Activated CD4-positive, alpha-beta T cell treated with anti-CD3 and anti-CD28 coated beads, Interleukin-2, amount 10 ng/mL, durations not matched to agents 24 days and 14 days (primary cell): ENCODE measurements at regions of chr10 and their contacts with region 1.

Region 1: GRCh38 chr10:71771821-71772617 is 1.3 kb downstream of the VSIR start:
- DNase-seq: peak; percentile 82
- H3K4me3 Mint-ChIP-seq: peak overlapping the region; percentile 85
- H3K27ac Mint-ChIP-seq: peak overlapping the region; percentile 96
- H3K4me1 Mint-ChIP-seq: peaks cover 67% of the 10 kb centered on the region
- H3K27me3 Mint-ChIP-seq: no peaks in the 10 kb centered on the region

Region 2: DNA sequence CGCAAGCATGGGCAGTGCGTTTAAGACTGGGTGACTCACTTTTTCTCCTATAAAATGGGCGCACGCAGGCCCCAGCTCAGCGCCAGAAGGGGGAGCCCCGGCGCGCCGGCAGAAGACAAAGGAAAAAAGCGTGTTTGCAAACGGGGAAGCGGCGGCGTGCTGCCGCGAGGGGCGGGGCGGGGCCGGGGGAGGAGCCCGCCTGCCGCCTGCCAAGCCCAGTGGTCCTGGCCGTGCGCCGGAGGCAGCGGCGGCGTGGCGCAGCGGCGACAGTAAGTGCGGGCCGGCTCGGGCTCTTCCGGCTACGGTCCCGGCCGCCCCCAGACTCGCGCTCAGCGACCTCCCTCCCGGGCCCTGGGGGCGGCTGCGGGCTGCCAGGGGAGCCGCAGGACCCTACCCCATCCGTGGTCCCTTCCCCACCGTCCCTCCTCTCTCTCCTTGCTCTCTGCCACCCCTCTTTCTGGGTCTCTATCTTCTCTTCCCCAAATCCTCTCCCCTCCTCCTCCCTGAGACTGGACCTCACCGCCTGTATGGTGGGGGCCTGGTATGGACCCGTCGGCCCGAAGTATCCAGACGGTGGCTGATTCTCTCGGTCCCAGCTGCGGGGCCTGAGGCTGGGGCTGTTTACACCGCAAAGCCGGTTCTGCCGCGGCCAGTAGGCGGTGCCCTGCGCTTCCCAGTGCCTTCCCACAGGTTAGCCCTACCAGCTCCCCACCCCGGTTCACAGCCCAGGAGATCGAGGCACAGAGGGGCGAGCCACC is 452.8 kb before region 1 on chr10 and contains the start of gene SLC29A3:
- intact Hi-C with region 1: loop called (anchors 5 kb)
- DNase-seq: peak; percentile 95
- H3K4me3 Mint-ChIP-seq: peak within 1 kb of the TSS; percentile 98
- H3K27ac Mint-ChIP-seq: peak within 1 kb of the TSS; percentile 94
- H3K4me1 Mint-ChIP-seq: peaks cover 34% of the 10 kb centered on the region
- H3K27me3 Mint-ChIP-seq: no peaks in the 10 kb centered on the region
- total RNA-seq, gene SLC29A3: 5.6 and 6.0 TPM in 2 replicates

Region 3: GRCh38 chr10:71727738-71728737 is 44.0 kb before region 1 on chr10:
- intact Hi-C with region 1: loop called (anchors 1 kb)
- DNase-seq: peak; percentile 86
- H3K4me3 Mint-ChIP-seq: peak overlapping the region; percentile 78
- H3K27ac Mint-ChIP-seq: peak overlapping the region; percentile 98
- H3K4me1 Mint-ChIP-seq: peaks cover 69% of the 10 kb centered on the region
- H3K27me3 Mint-ChIP-seq: no peaks in the 10 kb centered on the region

Region 4: DNA sequence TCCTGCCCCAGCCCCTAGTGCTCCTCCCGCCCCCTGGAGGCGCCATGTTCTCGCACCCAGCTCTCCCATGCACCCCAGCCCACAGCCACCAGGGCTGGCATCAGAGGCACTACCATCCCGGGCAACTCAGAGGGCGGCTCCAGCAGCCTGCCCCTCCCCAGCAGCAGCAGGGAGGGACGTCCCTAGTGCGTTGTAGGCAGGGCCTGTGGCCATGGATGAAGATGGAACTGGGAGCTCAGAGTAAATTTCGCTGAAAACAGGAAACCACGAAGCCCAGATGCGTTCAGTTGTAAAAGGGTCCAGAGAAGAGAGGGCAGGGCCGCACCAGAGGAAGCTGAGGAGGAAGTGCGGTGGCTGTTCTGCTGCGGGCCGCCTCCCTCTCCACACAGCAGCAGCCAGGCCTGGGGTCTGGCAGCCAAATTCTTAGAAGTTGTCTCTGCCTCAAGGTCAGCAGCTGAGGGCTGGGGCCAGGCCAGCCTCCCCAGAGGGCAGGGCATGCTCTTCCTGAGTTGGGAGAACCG is 23.3 kb before region 1 on chr10:
- intact Hi-C with region 1: loop called (anchors 2 kb)
- DNase-seq: peak; percentile 95
- H3K4me3 Mint-ChIP-seq: peak overlapping the region; percentile 78
- H3K27ac Mint-ChIP-seq: peak overlapping the region; percentile 99
- H3K4me1 Mint-ChIP-seq: peaks cover 91% of the 10 kb centered on the region
- H3K27me3 Mint-ChIP-seq: no peaks in the 10 kb centered on the region

Region 5: GRCh38 chr10:71812016-71812912 is 40.2 kb after region 1 on chr10:
- intact Hi-C with region 1: loop called (anchors 5 kb)
- DNase-seq: peak; percentile 92
- H3K4me3 Mint-ChIP-seq: no peak overlapping the region
- H3K27ac Mint-ChIP-seq: peak overlapping the region; percentile 11
- H3K4me1 Mint-ChIP-seq: peaks cover 2% of the 10 kb centered on the region
- H3K27me3 Mint-ChIP-seq: no peaks in the 10 kb centered on the region